Caco-2 (cell line): ENCODE measurements at regions of chr17 and their contacts with region 1.

Region 1: GRCh38 chr17:74457146-74457819 is 9.2 kb upstream of the CD300A start:
- DNase-seq: peak; percentile 69 to 83
- H3K4me3 ChIP-seq: no peak overlapping the region
- H3K4me3 Mint-ChIP-seq: no peak overlapping the region
- H3K27ac Mint-ChIP-seq: no peak overlapping the region
- H3K4me1 ChIP-seq: peaks cover 16% of the 10 kb centered on the region
- H3K4me1 Mint-ChIP-seq: peaks cover 8% of the 10 kb centered on the region
- H3K27me3 ChIP-seq: no peaks in the 10 kb centered on the region
- H3K27me3 Mint-ChIP-seq: no peaks in the 10 kb centered on the region
- CTCF ChIP-seq: peak; percentile 93 to 95

Region 2: GRCh38 chr17:74368092-74369081 is 88.9 kb before region 1 on chr17:
- CTCF ChIA-PET with region 1: interaction called, 33 read pairs
- POLR2A ChIA-PET with region 1: interaction called, 5 read pairs
- intact Hi-C with region 1: loop called (anchors 1 kb)
- DNase-seq: peak; percentile 72 to 75
- H3K4me3 ChIP-seq: no peak overlapping the region
- H3K4me3 Mint-ChIP-seq: no peak overlapping the region
- H3K27ac Mint-ChIP-seq: no peak overlapping the region
- H3K4me1 ChIP-seq: peaks cover 7% of the 10 kb centered on the region
- H3K4me1 Mint-ChIP-seq: peaks cover 5% of the 10 kb centered on the region
- H3K27me3 ChIP-seq: no peaks in the 10 kb centered on the region
- H3K27me3 Mint-ChIP-seq: no peaks in the 10 kb centered on the region
- CTCF ChIP-seq: peak; percentile 88 to 97

Region 3: GRCh38 chr17:74379495-74380085 is 77.7 kb before region 1 on chr17:
- CTCF ChIA-PET with region 1: interaction called, 110 read pairs
- POLR2A ChIA-PET with region 1: interaction called, 7 read pairs
- intact Hi-C with region 1: loop called (anchors 1 kb)
- DNase-seq: peak; percentile 92 to 95
- H3K4me3 ChIP-seq: no peak overlapping the region
- H3K4me3 Mint-ChIP-seq: no peak overlapping the region
- H3K27ac Mint-ChIP-seq: no peak overlapping the region
- H3K4me1 ChIP-seq: peaks cover 18% of the 10 kb centered on the region
- H3K4me1 Mint-ChIP-seq: peaks cover 16% of the 10 kb centered on the region
- H3K27me3 ChIP-seq: no peaks in the 10 kb centered on the region
- H3K27me3 Mint-ChIP-seq: no peaks in the 10 kb centered on the region
- CTCF ChIP-seq: peak; percentile 95 to 98

Region 4: GRCh38 chr17:74430706-74431567 is 26.3 kb before region 1 on chr17:
- CTCF ChIA-PET with region 1: interaction called, 7 read pairs
- POLR2A ChIA-PET with region 1: interaction called, 3 read pairs
- intact Hi-C with region 1: loop called (anchors 2 kb)
- DNase-seq: peak; percentile 87 to 88
- H3K4me3 ChIP-seq: peak overlapping the region; percentile 50
- H3K4me3 Mint-ChIP-seq: peak overlapping the region; percentile 99
- H3K27ac Mint-ChIP-seq: peak overlapping the region; percentile 97
- H3K4me1 ChIP-seq: peaks cover 43% of the 10 kb centered on the region
- H3K4me1 Mint-ChIP-seq: peaks cover 27% of the 10 kb centered on the region
- H3K27me3 ChIP-seq: no peaks in the 10 kb centered on the region
- H3K27me3 Mint-ChIP-seq: no peaks in the 10 kb centered on the region
- CTCF ChIP-seq: no peak

Region 5: DNA sequence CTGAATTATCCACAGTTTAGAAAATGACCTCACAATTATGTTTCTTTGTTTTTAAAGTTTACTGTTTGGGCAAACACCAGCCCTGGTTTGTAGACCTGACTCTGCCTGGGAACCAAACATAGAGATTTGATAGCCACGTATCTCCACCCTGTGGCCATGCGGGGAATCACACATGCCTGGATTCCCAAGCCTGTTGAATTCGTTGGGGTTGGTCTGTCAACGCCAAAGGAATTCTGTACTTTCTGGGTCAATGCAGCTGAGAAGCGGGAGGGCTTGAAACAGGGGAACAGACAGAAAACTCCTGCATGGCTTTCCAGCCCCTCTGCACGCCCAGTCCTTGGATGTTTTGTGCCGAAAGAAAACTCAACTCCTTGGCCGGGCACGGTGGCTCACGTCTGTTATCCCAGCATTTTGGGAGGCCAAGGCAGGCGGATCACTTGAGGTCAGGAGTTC is 36.1 kb after region 1 on chr17:
- CTCF ChIA-PET with region 1: interaction called, 3 read pairs
- POLR2A ChIA-PET with region 1: no interaction called
- intact Hi-C with region 1: loop called (anchors 1 kb)
- DNase-seq: peak; percentile 72 to 84
- H3K4me3 ChIP-seq: no peak overlapping the region
- H3K4me3 Mint-ChIP-seq: no peak overlapping the region
- H3K27ac Mint-ChIP-seq: no peak overlapping the region
- H3K4me1 ChIP-seq: no peaks in the 10 kb centered on the region
- H3K4me1 Mint-ChIP-seq: no peaks in the 10 kb centered on the region
- H3K27me3 ChIP-seq: no peaks in the 10 kb centered on the region
- H3K27me3 Mint-ChIP-seq: peaks cover 10% of the 10 kb centered on the region
- CTCF ChIP-seq: peak; percentile 89 to 93